ENCODE measurements at regions of chr11 and their contacts with region 1.

Region 1: DNA sequence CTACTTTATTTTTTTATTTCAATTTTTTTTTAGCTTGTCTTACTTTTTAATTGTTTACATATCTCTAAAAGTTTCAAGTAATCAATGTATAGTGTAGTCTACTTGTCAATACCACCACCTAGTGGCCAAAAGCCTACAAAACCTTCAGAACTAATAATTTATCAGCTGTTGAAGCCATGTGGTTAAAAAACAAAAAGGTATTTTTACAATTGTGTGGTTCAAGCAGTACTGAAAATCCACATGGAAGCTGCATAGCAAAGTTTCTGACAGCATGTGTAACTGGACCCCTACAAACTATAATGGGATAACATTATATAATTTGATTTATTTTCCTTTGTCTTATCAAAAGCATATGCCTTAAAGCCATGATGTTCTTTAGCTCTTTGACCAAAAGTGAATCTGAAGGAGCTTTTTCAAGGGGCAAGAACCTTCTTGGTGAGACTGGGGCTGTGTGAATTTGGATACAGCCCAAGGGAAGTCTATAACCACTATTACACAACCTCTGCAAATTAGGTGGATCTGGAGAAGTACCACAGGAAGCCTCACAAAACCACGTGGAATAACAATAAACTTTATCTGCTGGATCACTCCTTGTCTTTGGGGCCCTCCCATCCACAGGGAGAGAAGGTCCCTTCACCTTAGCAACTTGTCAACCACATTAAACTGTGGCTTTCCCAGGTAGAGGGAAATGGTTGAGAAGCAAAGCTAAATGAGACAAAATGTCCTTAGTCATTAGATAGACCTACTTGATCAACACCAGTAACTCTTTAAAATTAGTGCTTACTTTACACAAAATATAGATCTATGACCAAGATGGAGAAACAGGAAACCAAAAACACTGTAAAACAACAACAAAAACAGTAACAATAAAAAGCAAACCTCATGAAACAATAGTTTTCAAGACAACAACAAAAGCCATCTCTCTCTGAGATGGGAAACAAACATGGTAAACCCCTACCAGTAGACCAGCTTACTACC is 9.9 kb downstream of the NARS2 start:
- DNase-seq: peak; percentile 80
- ATAC-seq: peak; percentile 65
- H3K4me3 ChIP-seq: no peak overlapping the region
- H3K4me3 Mint-ChIP-seq: no peak overlapping the region
- H3K27ac ChIP-seq: no peak overlapping the region
- H3K27ac Mint-ChIP-seq: no peak overlapping the region
- H3K4me1 ChIP-seq: peaks cover 17% of the 10 kb centered on the region in 2 donors
- H3K4me1 Mint-ChIP-seq: peaks cover 28% of the 10 kb centered on the region
- H3K27me3 ChIP-seq: no peaks in the 10 kb centered on the region
- H3K27me3 Mint-ChIP-seq: no peaks in the 10 kb centered on the region
- CTCF ChIP-seq: peak; percentile 84

Region 2: DNA sequence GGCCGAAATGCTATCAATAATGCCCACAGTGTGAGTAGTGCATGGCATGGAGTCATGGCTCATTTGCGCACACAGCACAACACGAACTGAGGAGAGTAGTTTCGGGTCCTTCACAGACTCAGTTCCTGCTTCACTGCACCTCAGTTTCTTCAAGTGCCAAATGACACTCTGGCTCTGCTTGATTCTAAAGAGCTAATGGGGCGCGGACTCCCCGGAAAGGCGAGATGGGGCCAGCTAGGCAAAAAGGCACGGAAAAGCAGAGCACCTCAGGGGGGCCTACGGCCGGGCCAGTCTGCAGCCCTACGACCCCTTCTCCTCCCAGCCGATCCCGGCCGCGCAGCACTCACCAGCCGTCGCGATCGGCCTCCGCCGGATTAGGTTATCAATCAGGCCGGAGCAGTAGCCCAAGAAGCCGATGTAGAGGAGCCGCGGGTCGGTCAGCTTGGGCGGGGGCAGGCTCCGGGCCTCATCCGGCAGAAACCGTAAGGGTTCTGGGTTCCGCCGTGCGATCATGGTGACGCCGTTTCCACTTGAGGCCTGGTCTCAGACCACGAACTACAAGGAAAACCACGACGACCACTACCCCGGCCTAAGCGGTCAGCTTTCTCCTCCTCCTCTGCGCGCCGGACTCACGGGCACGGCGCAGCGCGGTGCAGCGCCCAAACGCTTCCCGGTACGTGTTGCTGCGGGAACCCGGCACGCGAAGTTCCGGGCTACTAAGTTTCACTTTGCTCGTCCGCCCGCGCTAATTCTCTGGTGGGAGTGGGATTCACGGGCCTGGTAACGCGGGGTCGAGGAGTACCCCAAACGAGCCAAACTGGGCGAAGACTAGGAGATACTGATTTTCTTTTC is 485.3 kb before region 1 on chr11 and contains the start of gene NDUFC2:
- CTCF ChIA-PET with region 1: interaction called, 12 read pairs
- POLR2A ChIA-PET with region 1: no interaction called
- intact Hi-C with region 1: no loop called
- DNase-seq: peak; percentile 76
- ATAC-seq: peak; percentile 86
- H3K4me3 ChIP-seq: peak within 1 kb of the TSS; percentile 89 to 96 (median 92)
- H3K4me3 Mint-ChIP-seq: peak within 1 kb of the TSS; percentile 93
- H3K27ac ChIP-seq: peak within 1 kb of the TSS; percentile 31 to 63
- H3K27ac Mint-ChIP-seq: peak within 1 kb of the TSS; percentile 86
- H3K4me1 ChIP-seq: peaks cover 18 to 35% of the 10 kb centered on the region in 2 donors
- H3K4me1 Mint-ChIP-seq: peaks cover 48% of the 10 kb centered on the region
- H3K27me3 ChIP-seq: no peaks in the 10 kb centered on the region
- H3K27me3 Mint-ChIP-seq: no peaks in the 10 kb centered on the region
- CTCF ChIP-seq: no peak
- total RNA-seq, gene NDUFC2: 39.4 and 49.0 TPM in 2 replicates

Region 3: GRCh38 chr11:78397387-78397786 is 167.4 kb before region 1 on chr11:
- CTCF ChIA-PET with region 1: interaction called, 13 read pairs
- POLR2A ChIA-PET with region 1: no interaction called
- intact Hi-C with region 1: no loop called
- DNase-seq: peak; percentile 61
- ATAC-seq: peak; percentile 76
- H3K4me3 ChIP-seq: no peak overlapping the region
- H3K4me3 Mint-ChIP-seq: peak overlapping the region; percentile 30
- H3K27ac ChIP-seq: no peak overlapping the region
- H3K27ac Mint-ChIP-seq: peak overlapping the region; percentile 54
- H3K4me1 ChIP-seq: peaks cover 8 to 11% of the 10 kb centered on the region in 2 donors
- H3K4me1 Mint-ChIP-seq: peaks cover 45% of the 10 kb centered on the region
- H3K27me3 ChIP-seq: no peaks in the 10 kb centered on the region
- H3K27me3 Mint-ChIP-seq: no peaks in the 10 kb centered on the region
- CTCF ChIP-seq: peak; percentile 50

Region 4: GRCh38 chr11:78424334-78425270 is 140.2 kb before region 1 on chr11:
- CTCF ChIA-PET with region 1: interaction called, 117 read pairs
- POLR2A ChIA-PET with region 1: interaction called, 3 read pairs
- intact Hi-C with region 1: no loop called
- DNase-seq: peak; percentile 71
- ATAC-seq: peak; percentile 13
- H3K4me3 ChIP-seq: peak overlapping the region in 2 of 5 experiments; percentile 22 to 34
- H3K4me3 Mint-ChIP-seq: peak overlapping the region; percentile 80
- H3K27ac ChIP-seq: peak overlapping the region; percentile 52 to 79
- H3K27ac Mint-ChIP-seq: peak overlapping the region; percentile 94
- H3K4me1 ChIP-seq: peaks cover 60 to 64% of the 10 kb centered on the region in 2 donors
- H3K4me1 Mint-ChIP-seq: peaks cover 75% of the 10 kb centered on the region
- H3K27me3 ChIP-seq: no peaks in the 10 kb centered on the region
- H3K27me3 Mint-ChIP-seq: no peaks in the 10 kb centered on the region
- CTCF ChIP-seq: no peak

Region 5: GRCh38 chr11:78465169-78465942 is 99.4 kb before region 1 on chr11:
- CTCF ChIA-PET with region 1: interaction called, 10 read pairs
- POLR2A ChIA-PET with region 1: no interaction called
- intact Hi-C with region 1: no loop called
- DNase-seq: peak; percentile 81
- ATAC-seq: peak; percentile 89
- H3K4me3 ChIP-seq: peak overlapping the region in 3 of 5 experiments; percentile 16 to 34 (median 20)
- H3K4me3 Mint-ChIP-seq: peak overlapping the region; percentile 72
- H3K27ac ChIP-seq: peak overlapping the region; percentile 90 to 92
- H3K27ac Mint-ChIP-seq: peak overlapping the region; percentile 95
- H3K4me1 ChIP-seq: peaks cover 26 to 27% of the 10 kb centered on the region in 2 donors
- H3K4me1 Mint-ChIP-seq: peaks cover 44% of the 10 kb centered on the region
- H3K27me3 ChIP-seq: no peaks in the 10 kb centered on the region
- H3K27me3 Mint-ChIP-seq: no peaks in the 10 kb centered on the region
- CTCF ChIP-seq: no peak

Region 6: DNA sequence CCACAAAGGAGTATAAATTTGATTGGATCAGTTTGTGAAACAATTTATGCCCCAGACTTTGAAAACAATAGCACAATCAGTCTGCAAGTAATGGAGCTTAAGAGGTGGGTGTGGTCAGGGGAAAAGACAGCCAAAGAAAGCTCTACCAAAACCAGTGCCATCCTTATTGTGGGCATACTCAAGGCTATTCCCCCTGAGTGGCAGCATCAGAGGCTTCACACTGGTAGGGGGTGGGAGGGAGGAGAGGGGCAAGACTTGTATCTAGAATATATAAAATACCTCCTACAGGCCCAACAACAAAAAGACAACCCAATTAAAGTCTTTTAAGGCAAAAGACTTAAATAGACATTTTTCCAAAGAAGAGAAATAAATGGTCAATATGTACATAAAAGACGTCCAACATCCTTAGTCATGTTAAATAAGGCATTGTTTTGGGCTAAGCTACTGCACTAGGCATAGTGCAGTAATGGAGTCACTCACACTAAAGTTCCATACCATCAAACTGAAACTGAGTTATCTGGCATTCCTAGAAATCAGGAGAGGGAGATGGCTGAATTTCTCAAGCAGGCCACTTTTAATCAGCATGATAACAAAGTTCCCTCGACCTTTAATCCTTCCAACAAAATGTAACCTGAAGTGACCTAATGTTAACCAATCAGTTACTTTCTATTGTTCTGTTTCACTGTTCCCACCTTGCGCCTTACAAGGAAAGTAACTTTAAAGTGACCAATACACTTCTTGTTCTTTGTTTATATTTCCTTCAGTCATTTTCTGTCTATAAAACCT is 15.0 kb before region 1 on chr11:
- CTCF ChIA-PET with region 1: interaction called, 20 read pairs
- POLR2A ChIA-PET with region 1: no interaction called
- intact Hi-C with region 1: no loop called
- DNase-seq: no peak
- ATAC-seq: no peak
- H3K4me3 ChIP-seq: no peak overlapping the region
- H3K4me3 Mint-ChIP-seq: no peak overlapping the region
- H3K27ac ChIP-seq: no peak overlapping the region
- H3K27ac Mint-ChIP-seq: no peak overlapping the region
- H3K4me1 ChIP-seq: no peaks in the 10 kb centered on the region
- H3K4me1 Mint-ChIP-seq: peaks cover 1% of the 10 kb centered on the region
- H3K27me3 ChIP-seq: no peaks in the 10 kb centered on the region
- H3K27me3 Mint-ChIP-seq: no peaks in the 10 kb centered on the region
- CTCF ChIP-seq: no peak